ENCODE measurements at regions of chr14 and their contacts with region 1.

Region 1: DNA sequence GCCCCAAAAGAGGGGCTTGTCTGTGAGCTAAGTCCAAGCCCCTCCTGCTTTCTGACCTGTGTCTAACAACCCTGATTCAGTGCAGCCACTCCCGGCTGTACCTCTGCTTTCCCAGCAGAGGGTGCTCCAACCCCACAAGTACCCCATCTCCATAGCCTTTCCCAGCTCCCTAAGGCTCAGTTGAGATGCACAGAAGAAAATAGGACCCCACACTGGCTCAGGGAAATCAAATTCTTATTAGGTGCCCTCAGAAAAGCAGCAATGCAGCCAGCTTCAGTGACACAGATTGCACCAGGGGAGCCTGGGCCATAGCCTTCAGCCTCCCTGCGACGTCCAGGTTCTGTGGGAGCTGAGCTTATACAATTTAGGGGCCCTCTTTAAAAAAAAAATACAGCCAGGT is 49.9 kb downstream of the LRRC74A start:
- DNase-seq: peak; percentile 61
- H3K4me3 Mint-ChIP-seq: no peak overlapping the region
- H3K27ac Mint-ChIP-seq: no peak overlapping the region
- H3K4me1 Mint-ChIP-seq: peaks cover 2% of the 10 kb centered on the region
- H3K27me3 Mint-ChIP-seq: no peaks in the 10 kb centered on the region

Region 2: DNA sequence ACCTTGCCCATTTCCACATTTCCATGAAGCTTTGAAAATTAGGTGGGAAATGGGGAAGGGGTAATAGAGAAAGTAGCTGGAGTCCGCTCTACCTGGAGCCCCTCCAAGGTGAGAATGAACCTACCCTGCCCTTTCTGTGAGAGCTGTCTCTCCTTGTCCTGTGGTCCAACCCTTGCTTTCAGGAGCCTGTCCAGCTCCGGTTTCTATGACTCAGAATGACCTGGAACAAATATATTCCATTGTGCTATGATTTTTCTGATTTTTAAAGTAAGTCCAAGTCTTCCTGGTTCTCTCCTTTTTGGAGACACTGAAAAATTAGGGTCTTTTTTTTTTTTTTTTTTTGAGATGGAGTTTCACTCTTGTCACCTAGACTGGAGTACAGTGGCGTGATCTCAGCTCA is 204.0 kb before region 1 on chr14:
- CTCF ChIA-PET with region 1: no interaction called
- POLR2A ChIA-PET with region 1: no interaction called
- intact Hi-C with region 1: no loop called
- DNase-seq: no peak
- H3K4me3 Mint-ChIP-seq: no peak overlapping the region
- H3K27ac Mint-ChIP-seq: no peak overlapping the region
- H3K4me1 Mint-ChIP-seq: no peaks in the 10 kb centered on the region
- H3K27me3 Mint-ChIP-seq: peaks cover 10% of the 10 kb centered on the region

Region 3: DNA sequence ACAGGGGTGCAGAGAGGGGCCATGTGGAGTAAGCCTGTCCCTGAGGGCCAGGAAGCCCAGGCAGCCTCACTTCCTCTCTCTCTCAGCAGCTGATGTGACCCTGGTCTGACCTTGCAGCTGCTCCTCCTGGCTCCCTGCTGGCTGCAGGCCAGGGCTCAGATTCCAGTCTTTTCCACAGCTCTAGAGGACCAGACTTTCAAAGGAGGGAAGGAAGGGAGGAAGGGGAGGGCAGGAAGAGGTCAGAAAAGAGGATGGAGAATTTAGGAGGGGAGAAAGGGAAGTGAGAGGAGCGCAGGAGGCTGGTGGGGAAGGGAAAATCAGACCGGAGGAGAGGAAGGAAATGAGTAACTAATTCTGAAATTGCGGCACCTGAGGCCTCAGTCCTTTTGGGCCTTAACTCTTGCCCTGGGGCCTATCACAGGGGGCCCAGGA is 155.7 kb before region 1 on chr14:
- CTCF ChIA-PET with region 1: no interaction called
- POLR2A ChIA-PET with region 1: no interaction called
- intact Hi-C with region 1: no loop called
- DNase-seq: no peak
- H3K4me3 Mint-ChIP-seq: no peak overlapping the region
- H3K27ac Mint-ChIP-seq: no peak overlapping the region
- H3K4me1 Mint-ChIP-seq: no peaks in the 10 kb centered on the region
- H3K27me3 Mint-ChIP-seq: peaks cover 24% of the 10 kb centered on the region

Region 4: GRCh38 chr14:76761136-76761959 is 114.7 kb before region 1 on chr14 and contains the start of gene VASH1:
- CTCF ChIA-PET with region 1: no interaction called
- POLR2A ChIA-PET with region 1: no interaction called
- intact Hi-C with region 1: no loop called
- DNase-seq: peak; percentile 73
- H3K4me3 Mint-ChIP-seq: peak within 1 kb of the TSS; percentile 75
- H3K27ac Mint-ChIP-seq: no peak within 1 kb of the TSS
- H3K4me1 Mint-ChIP-seq: peaks cover 12% of the 10 kb centered on the region
- H3K27me3 Mint-ChIP-seq: peaks cover 6% of the 10 kb centered on the region
- total RNA-seq, gene VASH1: 6.1 TPM

Region 5: DNA sequence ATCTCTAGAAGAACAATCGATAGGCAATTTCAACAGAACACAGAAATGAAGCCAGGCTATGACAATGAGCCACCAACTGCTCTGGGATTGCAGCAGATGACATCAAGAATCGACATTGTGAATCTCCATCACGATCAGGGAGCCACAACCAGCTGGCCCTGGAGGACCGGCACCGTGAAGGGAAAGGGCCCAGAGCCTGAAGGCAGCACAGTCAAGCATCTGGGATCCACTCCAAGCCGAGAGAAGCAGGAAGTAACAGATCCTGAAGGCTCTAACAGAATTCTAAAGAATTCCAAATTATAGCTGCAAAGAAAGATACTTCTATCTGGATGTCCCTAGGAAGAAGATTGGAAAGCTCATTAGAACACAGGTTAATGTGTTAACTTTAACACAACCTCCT is 11.1 kb after region 1 on chr14:
- CTCF ChIA-PET with region 1: interaction called, 21 read pairs
- POLR2A ChIA-PET with region 1: no interaction called
- intact Hi-C with region 1: no loop called
- DNase-seq: no peak
- H3K4me3 Mint-ChIP-seq: no peak overlapping the region
- H3K27ac Mint-ChIP-seq: no peak overlapping the region
- H3K4me1 Mint-ChIP-seq: no peaks in the 10 kb centered on the region
- H3K27me3 Mint-ChIP-seq: peaks cover 1% of the 10 kb centered on the region

Region 6: GRCh38 chr14:77040059-77040740 is 164.1 kb after region 1 on chr14:
- CTCF ChIA-PET with region 1: interaction called, 15 read pairs
- POLR2A ChIA-PET with region 1: interaction called, 3 read pairs
- intact Hi-C with region 1: no loop called
- DNase-seq: peak; percentile 97
- H3K4me3 Mint-ChIP-seq: peak overlapping the region; percentile 77
- H3K27ac Mint-ChIP-seq: peak overlapping the region; percentile 99
- H3K4me1 Mint-ChIP-seq: peaks cover 88% of the 10 kb centered on the region
- H3K27me3 Mint-ChIP-seq: no peaks in the 10 kb centered on the region

Region 7: DNA sequence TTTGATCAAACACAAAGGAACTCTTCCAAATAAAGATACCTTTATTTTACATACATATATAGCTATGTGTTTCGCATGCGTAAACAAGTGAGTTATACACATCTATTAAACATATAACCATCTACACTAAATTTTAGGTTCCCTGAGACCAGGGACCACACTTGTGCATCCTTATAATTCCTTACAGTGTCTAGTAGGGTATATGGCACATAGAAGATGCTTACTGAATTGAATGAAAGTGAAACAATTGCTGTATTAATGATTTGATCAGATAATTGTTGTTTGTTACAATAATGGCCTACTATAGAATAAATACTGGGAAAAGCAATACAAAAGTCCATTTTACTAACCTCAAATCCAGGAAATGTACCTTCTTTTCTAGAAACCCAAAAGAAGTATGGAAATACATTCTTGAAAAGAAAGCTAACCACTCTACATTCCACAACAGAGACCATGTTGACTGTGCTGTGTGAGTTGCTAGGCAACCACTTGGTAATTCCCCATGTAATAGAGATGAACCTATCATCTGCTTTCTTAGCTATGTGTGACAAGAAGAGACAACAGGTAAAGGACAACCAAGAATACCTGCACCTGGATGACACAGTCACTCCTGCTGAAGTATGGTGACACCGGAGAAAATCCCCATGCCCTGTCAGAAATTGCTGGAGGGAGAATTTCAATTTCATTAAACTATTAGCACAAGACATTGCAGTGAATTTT is 210.1 kb after region 1 on chr14:
- CTCF ChIA-PET with region 1: interaction called, 598 read pairs
- POLR2A ChIA-PET with region 1: no interaction called
- intact Hi-C with region 1: no loop called
- DNase-seq: no peak
- H3K4me3 Mint-ChIP-seq: no peak overlapping the region
- H3K27ac Mint-ChIP-seq: no peak overlapping the region
- H3K4me1 Mint-ChIP-seq: peaks cover 8% of the 10 kb centered on the region
- H3K27me3 Mint-ChIP-seq: peaks cover under 1% of the 10 kb centered on the region

Measured in activated CD4-positive, alpha-beta memory T cell treated with anti-CD3 and anti-CD28 coated beads for 36 hours (primary cell).